ENCODE measurements at regions of chr1 and their contacts with region 1.

Region 1: DNA sequence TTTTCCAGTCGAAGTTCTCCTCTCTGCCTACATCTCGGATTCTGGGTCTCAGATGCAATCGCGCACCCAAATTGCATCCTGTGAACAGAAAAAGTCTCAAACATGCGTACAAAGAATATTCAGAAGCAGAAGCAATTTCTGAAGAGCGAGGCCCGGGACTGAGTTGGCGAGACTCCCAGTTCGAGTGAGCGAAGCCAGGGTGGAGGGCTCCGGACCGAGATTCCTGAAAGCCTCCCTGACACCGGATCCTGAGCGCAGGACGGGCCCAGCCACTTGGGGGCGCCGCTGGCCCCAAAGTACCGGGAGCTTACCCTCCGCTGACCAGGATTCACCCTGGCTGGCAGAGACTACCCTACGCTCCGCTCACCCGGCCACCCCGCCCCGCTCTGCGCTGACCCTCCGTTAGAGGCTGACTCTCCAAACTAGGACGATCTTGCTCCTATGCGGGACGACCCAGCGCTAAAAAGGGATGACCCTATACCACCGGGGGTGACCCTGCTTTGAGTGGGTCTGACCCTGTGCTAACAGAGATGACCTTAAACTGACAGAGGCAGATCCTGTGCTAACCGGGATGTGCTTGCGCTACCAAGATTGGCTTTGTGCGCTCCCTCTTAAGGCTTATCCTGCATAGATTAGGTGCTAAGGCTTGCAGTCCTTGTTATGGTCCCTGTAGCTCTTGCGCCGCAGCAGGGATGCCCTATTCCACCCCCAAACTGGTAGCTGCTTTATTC is 12.1 kb downstream of the FOXD2 start:
- DNase-seq: no peak
- H3K4me3 ChIP-seq: no peak overlapping the region
- H3K27ac ChIP-seq: no peak overlapping the region
- H3K4me1 ChIP-seq: peaks cover 0 to 16% (median 7%) of the 10 kb centered on the region in 4 donors
- H3K27me3 ChIP-seq: peaks cover 0 to 44% of the 10 kb centered on the region in 2 donors
- CTCF ChIP-seq: peak in 1 of 2 experiments; percentile 48

Region 2: DNA sequence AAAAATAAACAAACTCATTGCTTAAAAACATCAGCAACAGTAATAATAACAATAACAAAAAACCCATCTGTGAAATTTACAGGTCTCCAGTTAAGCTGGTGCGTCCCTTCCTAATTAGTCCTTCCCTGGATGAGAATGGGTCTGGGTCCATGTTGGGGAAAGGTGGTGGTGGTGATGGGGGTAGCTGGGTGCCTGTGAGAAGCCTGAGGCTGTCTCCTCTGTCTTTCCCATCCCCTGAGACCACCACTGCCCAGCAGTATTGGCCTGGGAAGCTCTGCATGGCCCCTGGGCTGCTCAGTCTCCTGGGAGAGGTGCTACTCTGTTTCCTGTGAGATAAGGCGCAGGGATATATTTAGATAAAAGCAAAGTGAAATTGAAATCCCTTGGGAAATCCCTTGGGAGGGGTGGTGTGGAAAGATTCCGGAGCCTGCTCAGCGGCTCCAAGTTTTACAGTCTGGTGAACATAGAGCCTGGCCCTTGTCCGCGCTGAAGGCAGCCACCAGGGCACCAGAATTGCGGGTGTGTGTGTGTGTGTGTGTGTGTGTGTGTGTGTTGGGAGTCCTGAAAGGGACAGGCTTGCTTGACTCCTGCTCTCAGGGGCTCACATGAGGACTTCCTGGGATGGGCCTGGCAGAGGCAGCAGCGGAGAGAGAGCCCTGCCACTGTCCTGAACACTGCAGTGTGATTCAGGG is 138.1 kb after region 1 on chr1:
- intact Hi-C with region 1: loop called (anchors 10 kb)
- DNase-seq: peak; percentile 20 to 67
- H3K4me3 ChIP-seq: no peak overlapping the region
- H3K27ac ChIP-seq: no peak overlapping the region
- H3K4me1 ChIP-seq: peaks cover 0 to 56% (median 23%) of the 10 kb centered on the region in 4 donors
- H3K27me3 ChIP-seq: peaks cover 0 to 7% of the 10 kb centered on the region in 2 donors
- CTCF ChIP-seq: peak in 1 of 2 experiments; percentile 30

Measured in tibial artery (tissue), 4 donors.